Right ventricle myocardium superior (tissue), 1 donor: ENCODE measurements at regions of chr20 and their contacts with region 1.

Region 1: GRCh38 chr20:47620808-47621805 is 119.4 kb downstream of the NCOA3 start:
- DNase-seq: no peak
- ATAC-seq: peak; percentile 69

Region 2: DNA sequence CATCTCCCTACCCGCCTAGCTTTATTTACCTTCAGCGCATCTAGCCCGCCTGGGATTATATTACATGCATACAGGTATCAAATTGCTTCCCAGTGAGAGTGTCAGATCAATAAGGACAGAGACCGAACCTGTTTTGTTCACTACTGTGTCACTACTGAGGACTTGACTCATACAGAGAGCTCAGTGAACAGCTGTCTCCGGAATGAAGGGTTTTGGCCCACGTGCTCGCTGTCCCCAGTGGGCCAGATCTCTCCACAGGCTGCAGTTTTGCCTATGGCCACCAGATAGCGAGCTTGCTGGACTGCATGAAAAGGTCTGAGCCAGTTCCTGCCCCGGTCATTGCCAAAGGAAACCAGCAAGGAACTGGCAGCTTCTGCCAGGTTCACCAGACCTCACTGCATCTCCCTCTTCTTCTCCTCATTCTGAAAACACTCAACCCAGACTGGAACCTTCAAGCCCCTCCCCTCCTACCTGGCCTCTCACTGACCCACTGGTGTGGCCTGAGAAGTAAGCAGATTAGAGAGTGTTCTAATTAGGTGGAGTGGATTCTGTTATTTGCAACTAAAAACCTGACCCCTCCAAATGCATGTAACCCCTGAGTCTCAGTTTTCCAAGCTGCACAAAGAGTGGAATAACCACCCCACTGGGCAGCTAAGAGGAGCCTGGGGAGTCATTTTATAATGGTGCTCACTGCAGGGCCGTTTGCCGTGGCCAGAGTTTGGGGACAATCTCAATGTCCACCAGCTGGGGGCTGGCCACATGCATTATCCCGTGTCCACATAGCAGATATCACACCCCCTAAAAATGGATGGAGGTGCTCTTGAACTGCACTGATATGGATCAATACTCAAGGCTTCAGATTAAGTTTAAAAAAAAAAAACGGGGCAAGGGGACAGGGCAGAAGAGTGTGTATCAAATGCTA is 415.3 kb before region 1 on chr20:
- intact Hi-C with region 1: loop called (anchors 10 kb)
- DNase-seq: peak; percentile 82
- ATAC-seq: peak; percentile 83

Region 3: DNA sequence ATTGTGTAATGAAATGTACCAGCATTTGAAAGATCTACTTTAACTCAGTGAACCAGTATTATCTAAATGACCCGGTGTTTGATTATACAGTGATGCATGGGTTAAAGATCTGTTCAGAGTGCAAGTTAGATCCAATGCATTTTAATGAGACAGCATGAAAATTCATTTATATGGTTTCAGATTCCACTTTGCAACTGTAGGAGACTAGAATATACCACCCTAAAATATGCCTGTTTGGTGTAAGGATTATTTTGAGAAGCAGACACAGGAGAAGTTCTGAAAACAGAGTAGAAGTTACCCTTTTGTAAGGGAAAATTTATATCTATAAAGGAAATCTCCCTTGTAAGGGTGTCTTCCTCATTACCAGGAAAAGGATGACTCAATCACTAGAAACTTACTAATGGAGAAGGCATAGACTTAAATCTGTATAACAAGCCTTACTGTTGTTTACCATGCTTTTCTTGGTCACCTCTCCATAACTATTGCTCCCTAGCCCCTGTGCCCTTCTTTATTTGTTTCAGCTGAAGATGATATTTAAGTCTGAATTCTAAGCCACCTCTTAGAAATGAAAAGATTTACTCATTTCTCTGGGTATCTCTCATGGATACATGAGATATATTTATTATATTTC is 14.0 kb before region 1 on chr20:
- intact Hi-C with region 1: no loop called
- DNase-seq: no peak
- ATAC-seq: no peak

Region 4: DNA sequence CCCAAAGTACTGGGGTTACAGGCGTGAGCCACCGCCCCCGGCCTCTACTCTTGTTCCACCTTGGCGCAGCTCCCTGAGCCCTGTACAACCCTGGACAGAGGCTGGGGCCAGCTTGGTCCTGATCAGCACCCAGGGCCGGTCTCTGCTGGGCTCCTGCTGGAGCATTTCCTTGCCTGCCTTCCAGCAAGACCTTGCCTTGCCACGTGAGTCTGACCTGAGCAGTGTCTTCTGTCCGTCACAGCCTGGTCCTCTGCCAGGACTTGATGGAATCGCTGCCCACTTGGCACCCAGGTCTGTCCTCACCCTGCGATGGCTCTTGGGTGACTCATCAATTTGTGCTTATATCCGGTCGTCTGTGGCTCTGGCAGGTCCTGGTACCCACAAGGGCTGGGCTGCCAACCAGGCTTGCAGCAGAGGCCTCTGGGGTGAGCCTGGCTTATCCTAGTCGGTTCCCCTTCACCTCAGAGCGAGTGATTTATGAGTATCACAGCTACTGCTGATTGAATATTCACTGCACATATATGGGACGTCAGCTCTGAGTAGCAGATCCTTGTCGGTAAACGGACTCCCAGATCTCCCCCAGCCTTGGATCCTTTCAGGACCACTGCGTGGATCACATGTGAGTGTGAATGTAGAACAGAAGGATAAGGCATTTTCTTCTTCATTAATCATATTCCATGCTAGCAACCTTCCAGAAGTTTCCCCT is 174.3 kb after region 1 on chr20:
- intact Hi-C with region 1: no loop called
- DNase-seq: peak; percentile 61
- ATAC-seq: peak; percentile 20